ENCODE measurements at regions of chr1 and their contacts with region 1.

Region 1: GRCh38 chr1:231699784-231700183 is 73.2 kb downstream of the DISC1 start:
- DNase-seq: no peak
- ATAC-seq: no peak
- H3K4me3 ChIP-seq: no peak overlapping the region
- H3K27ac ChIP-seq: no peak overlapping the region
- H3K4me1 ChIP-seq: no peaks in the 10 kb centered on the region
- H3K27me3 ChIP-seq: no peaks in the 10 kb centered on the region
- CTCF ChIP-seq: no peak
- EP300 ChIP-seq: no peak
- POLR2A ChIP-seq: no peak
- RAD21 ChIP-seq: no peak

Region 2: GRCh38 chr1:231663211-231663792 is 36.5 kb before region 1 on chr1:
- CTCF ChIA-PET with region 1: no interaction called
- POLR2A ChIA-PET with region 1: no interaction called
- in situ Hi-C with region 1: no loop called
- intact Hi-C with region 1: loop called (anchors 1 kb)
- DNase-seq: peak; percentile 41
- ATAC-seq: no peak
- H3K4me3 ChIP-seq: no peak overlapping the region
- H3K27ac ChIP-seq: no peak overlapping the region
- H3K4me1 ChIP-seq: peaks cover 36% of the 10 kb centered on the region
- H3K27me3 ChIP-seq: no peaks in the 10 kb centered on the region
- CTCF ChIP-seq: no peak
- EP300 ChIP-seq: no peak
- POLR2A ChIP-seq: no peak
- RAD21 ChIP-seq: no peak

Region 3: DNA sequence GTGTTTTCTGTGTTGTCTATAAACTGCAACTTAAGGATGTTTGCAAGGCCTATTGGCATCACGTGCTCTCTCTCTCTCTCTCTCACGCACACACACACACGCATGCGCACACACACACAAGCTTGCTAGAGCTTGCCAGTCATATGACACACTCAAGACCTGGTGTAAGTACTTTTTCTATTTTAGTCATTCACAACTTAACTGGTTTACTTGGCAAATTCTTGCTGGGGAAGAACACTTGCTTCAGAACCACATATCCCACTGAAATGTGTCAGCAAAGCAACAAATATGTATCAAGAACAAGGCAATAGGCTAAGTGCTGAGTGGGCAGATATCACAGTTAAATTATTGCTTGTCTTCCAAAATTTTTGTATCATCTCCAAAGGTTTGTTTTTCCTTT is 34.6 kb after region 1 on chr1:
- CTCF ChIA-PET with region 1: no interaction called
- POLR2A ChIA-PET with region 1: no interaction called
- in situ Hi-C with region 1: no loop called
- intact Hi-C with region 1: no loop called
- DNase-seq: no peak
- ATAC-seq: no peak
- H3K4me3 ChIP-seq: no peak overlapping the region
- H3K27ac ChIP-seq: no peak overlapping the region
- H3K4me1 ChIP-seq: no peaks in the 10 kb centered on the region
- H3K27me3 ChIP-seq: no peaks in the 10 kb centered on the region
- CTCF ChIP-seq: no peak
- EP300 ChIP-seq: no peak
- POLR2A ChIP-seq: no peak
- RAD21 ChIP-seq: no peak